Stomach (tissue), 19 donors: ENCODE measurements at regions of chr6 and their contacts with region 1.

Region 1: DNA sequence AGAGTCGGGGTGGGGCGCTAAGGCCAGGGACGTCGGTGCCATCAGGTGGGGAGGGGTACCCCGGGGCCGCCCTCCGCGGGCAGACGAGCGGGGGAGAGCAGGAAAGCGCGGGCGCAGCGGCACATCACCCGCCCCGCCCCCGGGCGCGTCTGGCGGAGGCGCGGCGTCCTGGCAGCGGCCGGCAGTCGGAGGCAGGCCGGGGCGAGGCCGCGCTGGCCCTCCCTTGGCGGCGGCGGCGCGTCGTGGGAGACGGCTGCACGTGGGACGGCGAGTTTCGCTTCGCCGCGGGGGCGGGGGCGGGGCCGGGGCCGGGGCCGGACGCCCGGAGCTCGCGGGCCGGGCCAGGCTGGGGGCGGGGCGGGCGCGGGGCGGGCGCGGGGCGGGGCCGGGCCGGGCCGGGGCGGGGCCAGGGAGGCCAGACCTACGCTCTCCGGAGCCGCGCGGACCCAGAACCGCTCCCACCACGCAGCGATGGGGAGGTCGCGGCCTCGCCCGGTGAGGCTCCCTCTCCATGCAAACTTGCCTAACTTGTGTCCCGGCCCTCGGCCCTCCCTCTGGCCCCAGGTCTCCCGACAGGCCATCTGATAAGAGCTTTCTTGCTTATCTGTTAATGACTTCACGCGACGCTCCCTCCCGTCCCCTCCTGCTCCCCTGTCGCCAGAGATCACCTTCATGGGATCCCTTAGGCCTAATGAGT is 12.5 kb downstream of the ITPR3 start:
- DNase-seq: peak; percentile 84 to 92
- H3K4me3 ChIP-seq: peak overlapping the region; percentile 35 to 50 (median 43)
- H3K27ac ChIP-seq: peak overlapping the region; percentile 76 to 84 (median 80)
- H3K4me1 ChIP-seq: peaks cover 55 to 94% (median 77%) of the 10 kb centered on the region in 4 donors
- H3K27me3 ChIP-seq: peaks cover 0 to 20% (median 0%) of the 10 kb centered on the region in 3 donors
- CTCF ChIP-seq: no peak
- EP300 ChIP-seq: no peak
- POLR2A ChIP-seq: no peak

Region 2: GRCh38 chr6:33579828-33580714 is 53.5 kb before region 1 on chr6 and contains the start of gene BAK1:
- intact Hi-C with region 1: loop called (anchors 10 kb)
- DNase-seq: peak; percentile 93 to 97
- H3K4me3 ChIP-seq: peak within 1 kb of the TSS; percentile 64 to 91 (median 78)
- H3K27ac ChIP-seq: peak within 1 kb of the TSS; percentile 85 to 96 (median 91)
- H3K4me1 ChIP-seq: peaks cover 26 to 41% (median 39%) of the 10 kb centered on the region in 4 donors
- H3K27me3 ChIP-seq: no peaks in the 10 kb centered on the region
- CTCF ChIP-seq: peak in 5 of 7 experiments; percentile 8 to 61 (median 30)
- EP300 ChIP-seq: no peak
- POLR2A ChIP-seq: peak in 1 of 4 donors; percentile 38
- total RNA-seq, gene BAK1: 2.9 to 97.0 (median 22.3) TPM